GM12878 (cell line): ENCODE measurements at regions of chr19 and their contacts with region 1.

Region 1: GRCh38 chr19:35140962-35141637 is 2.0 kb upstream of the FXYD7 start:
- DNase-seq: no peak
- ATAC-seq: peak; percentile 90
- H3K4me3 ChIP-seq: peak overlapping the region; percentile 47; the same call in 1 of the 2 replicates
- H3K27ac ChIP-seq: no peak overlapping the region
- H3K4me1 ChIP-seq: peaks cover 17% of the 10 kb centered on the region
- H3K27me3 ChIP-seq: peaks cover 2 to 5% of the 10 kb centered on the region in 2 experiments; a peak in 2 of 4 replicates
- CTCF ChIP-seq: peak; percentile 38 to 75 (median 67)
- EP300 ChIP-seq: no peak
- POLR2A ChIP-seq: no peak
- RAD21 ChIP-seq: peak; percentile 47

Region 2: DNA sequence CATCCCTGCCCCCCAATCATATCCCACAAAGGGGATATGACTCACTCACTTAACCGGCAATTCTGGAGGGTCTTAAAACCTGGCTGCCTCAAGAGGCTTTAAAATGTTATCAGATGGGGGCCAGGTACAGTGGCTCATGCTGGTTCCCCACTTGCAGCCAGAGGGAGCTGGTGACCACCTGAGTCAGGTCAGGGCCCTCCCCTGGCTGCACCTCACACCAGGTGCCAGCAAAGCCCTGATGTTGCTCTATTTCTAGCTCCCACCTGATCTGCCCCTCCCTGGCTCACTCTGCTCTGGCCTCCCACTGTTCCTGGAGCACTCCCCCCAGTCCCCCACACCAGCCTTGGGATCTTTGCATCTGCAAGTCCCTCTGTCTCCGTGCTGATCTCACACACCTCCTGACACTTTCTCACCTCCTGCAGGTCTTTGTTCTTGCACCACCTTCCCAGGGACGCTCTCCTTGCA is 85.4 kb before region 1 on chr19:
- CTCF ChIA-PET with region 1: interaction called, 12 read pairs
- POLR2A ChIA-PET with region 1: no interaction called
- RAD21 ChIA-PET with region 1: no interaction called
- SMC1A ChIA-PET with region 1: no interaction called
- in situ Hi-C with region 1: no loop called
- intact Hi-C with region 1: no loop called
- DNase-seq: no peak
- ATAC-seq: peak; percentile 79
- H3K4me3 ChIP-seq: no peak overlapping the region
- H3K27ac ChIP-seq: no peak overlapping the region
- H3K4me1 ChIP-seq: no peaks in the 10 kb centered on the region
- H3K27me3 ChIP-seq: no peaks in the 10 kb centered on the region; a peak in 1 of 4 replicates
- CTCF ChIP-seq: peak; percentile 39 to 56 (median 44); a peak in 4 of 6 replicates
- EP300 ChIP-seq: no peak
- POLR2A ChIP-seq: no peak
- RAD21 ChIP-seq: peak; percentile 16; the same call in 1 of the 2 replicates

Region 3: GRCh38 chr19:35114353-35115176 is 26.5 kb before region 1 on chr19:
- CTCF ChIA-PET with region 1: interaction called, 75 read pairs
- POLR2A ChIA-PET with region 1: no interaction called
- RAD21 ChIA-PET with region 1: interaction called, 8 read pairs
- SMC1A ChIA-PET with region 1: interaction called, 10 read pairs
- in situ Hi-C with region 1: no loop called
- intact Hi-C with region 1: no loop called
- DNase-seq: no peak
- ATAC-seq: peak; percentile 95
- H3K4me3 ChIP-seq: no peak overlapping the region
- H3K27ac ChIP-seq: no peak overlapping the region
- H3K4me1 ChIP-seq: no peaks in the 10 kb centered on the region
- H3K27me3 ChIP-seq: peaks cover 0 to 2% of the 10 kb centered on the region in 2 experiments; a peak in 1 of 4 replicates
- CTCF ChIP-seq: peak; percentile 86 to 99 (median 97)
- EP300 ChIP-seq: no peak
- POLR2A ChIP-seq: no peak
- RAD21 ChIP-seq: peak; percentile 72

Region 4: GRCh38 chr19:35154525-35155406 is 13.7 kb after region 1 on chr19 and contains the start of gene FXYD5:
- CTCF ChIA-PET with region 1: interaction called, 26 read pairs
- POLR2A ChIA-PET with region 1: interaction called, 4 read pairs
- RAD21 ChIA-PET with region 1: interaction called, 17 read pairs
- SMC1A ChIA-PET with region 1: interaction called, 17 read pairs
- in situ Hi-C with region 1: no loop called
- intact Hi-C with region 1: no loop called
- DNase-seq: no peak
- ATAC-seq: peak; percentile 86
- H3K4me3 ChIP-seq: peak within 1 kb of the TSS; percentile 98
- H3K27ac ChIP-seq: peak within 1 kb of the TSS; percentile 34
- H3K4me1 ChIP-seq: peaks cover 6% of the 10 kb centered on the region
- H3K27me3 ChIP-seq: peaks cover 0 to 3% of the 10 kb centered on the region in 2 experiments; a peak in 1 of 4 replicates
- CTCF ChIP-seq: no peak
- EP300 ChIP-seq: no peak
- POLR2A ChIP-seq: peak; percentile 74
- RAD21 ChIP-seq: no peak
- polyA plus RNA-seq, gene FXYD5: 30.0 to 50.9 TPM

Region 5: DNA sequence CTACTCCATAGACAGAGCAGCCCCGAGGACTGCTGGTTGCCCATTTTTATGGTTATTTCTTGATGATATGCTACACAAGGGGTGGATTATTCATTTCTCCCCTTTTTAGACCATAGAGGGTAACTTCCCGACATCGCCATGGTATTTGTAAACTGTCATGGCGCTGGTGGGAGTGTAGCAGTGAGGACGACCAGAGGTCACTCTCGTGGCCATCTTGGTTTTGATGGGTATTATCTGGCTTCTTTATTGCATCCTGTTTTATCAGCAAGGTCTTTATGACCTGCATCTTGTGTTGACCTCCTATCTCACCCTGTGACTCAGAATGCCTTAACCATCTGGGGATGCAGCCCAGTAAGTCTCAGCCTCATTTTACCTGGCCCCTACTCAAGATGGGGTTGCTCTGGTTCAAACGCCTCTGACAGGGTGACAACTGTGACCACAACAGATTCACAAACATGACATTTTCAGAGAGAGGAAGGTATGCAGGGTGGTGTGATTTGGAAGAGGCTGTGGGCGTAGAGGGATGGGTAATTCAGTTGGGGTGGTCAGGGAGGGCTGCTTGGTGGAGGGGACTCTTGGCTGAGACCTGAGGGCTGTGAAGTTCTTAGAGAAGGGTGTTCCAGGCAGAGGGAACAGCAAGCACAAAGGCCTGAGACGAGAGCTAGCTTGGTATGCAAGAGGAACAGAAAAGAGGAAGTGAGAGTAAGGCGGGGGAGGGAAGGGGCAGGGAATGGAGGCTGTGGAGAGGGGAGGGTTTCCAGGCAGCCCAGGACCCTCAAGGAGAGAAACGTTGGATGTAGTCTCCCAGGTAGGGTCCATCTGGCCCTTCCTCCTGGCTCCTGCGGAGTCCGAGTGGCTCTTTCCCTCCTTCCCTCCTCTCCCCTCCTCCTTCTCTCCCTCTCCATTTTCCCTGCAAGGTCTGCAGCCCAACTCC is 64.0 kb after region 1 on chr19:
- CTCF ChIA-PET with region 1: interaction called, 11 read pairs
- POLR2A ChIA-PET with region 1: interaction called, 3 read pairs
- RAD21 ChIA-PET with region 1: interaction called, 15 read pairs
- SMC1A ChIA-PET with region 1: interaction called, 4 read pairs
- in situ Hi-C with region 1: no loop called
- intact Hi-C with region 1: no loop called
- DNase-seq: peak; percentile 87
- ATAC-seq: peak; percentile 92
- H3K4me3 ChIP-seq: peak overlapping the region; percentile 27; the same call in 1 of the 2 replicates
- H3K27ac ChIP-seq: peak overlapping the region; percentile 83
- H3K4me1 ChIP-seq: peaks cover 33% of the 10 kb centered on the region
- H3K27me3 ChIP-seq: no peaks in the 10 kb centered on the region; a peak in 1 of 4 replicates
- CTCF ChIP-seq: no peak
- EP300 ChIP-seq: peak; percentile 57 to 99; a peak in 3 of 4 replicates
- POLR2A ChIP-seq: no peak
- RAD21 ChIP-seq: no peak; the same call in 1 of the 2 replicates

Region 6: GRCh38 chr19:35247526-35248306 is 106.6 kb after region 1 on chr19:
- CTCF ChIA-PET with region 1: interaction called, 8 read pairs
- POLR2A ChIA-PET with region 1: interaction called, 4 read pairs
- RAD21 ChIA-PET with region 1: interaction called, 5 read pairs
- SMC1A ChIA-PET with region 1: interaction called, 4 read pairs
- in situ Hi-C with region 1: no loop called
- intact Hi-C with region 1: loop called (anchors 5 kb)
- DNase-seq: peak; percentile 46
- ATAC-seq: peak; percentile 71
- H3K4me3 ChIP-seq: peak overlapping the region; percentile 90
- H3K27ac ChIP-seq: peak overlapping the region; percentile 95
- H3K4me1 ChIP-seq: peaks cover 4% of the 10 kb centered on the region; the same call in 1 of the 2 replicates
- H3K27me3 ChIP-seq: no peaks in the 10 kb centered on the region
- CTCF ChIP-seq: peak; percentile 69 to 86 (median 77); a peak in 4 of 6 replicates
- EP300 ChIP-seq: no peak
- POLR2A ChIP-seq: no peak
- RAD21 ChIP-seq: peak; percentile 61